Heart left ventricle (tissue), 16 donors: ENCODE measurements at regions of chr3 and their contacts with region 1.

Region 1: GRCh38 chr3:45593708-45594609 is 592 bp upstream of the LIMD1 start:
- DNase-seq: peak; percentile 76 to 89 (median 83)
- ATAC-seq: peak; percentile 19 to 90 (median 74)
- H3K4me3 ChIP-seq: peak overlapping the region; percentile 56 to 97 (median 87)
- H3K27ac ChIP-seq: peak overlapping the region; percentile 89 to 97 (median 94)
- H3K4me1 ChIP-seq: peaks cover 0 to 57% (median 48%) of the 10 kb centered on the region in 12 donors
- H3K27me3 ChIP-seq: no peaks in the 10 kb centered on the region
- CTCF ChIP-seq: peak in 1 of 12 donors; percentile 12
- POLR2A ChIP-seq: peak in 1 of 2 donors; percentile 57

Region 2: DNA sequence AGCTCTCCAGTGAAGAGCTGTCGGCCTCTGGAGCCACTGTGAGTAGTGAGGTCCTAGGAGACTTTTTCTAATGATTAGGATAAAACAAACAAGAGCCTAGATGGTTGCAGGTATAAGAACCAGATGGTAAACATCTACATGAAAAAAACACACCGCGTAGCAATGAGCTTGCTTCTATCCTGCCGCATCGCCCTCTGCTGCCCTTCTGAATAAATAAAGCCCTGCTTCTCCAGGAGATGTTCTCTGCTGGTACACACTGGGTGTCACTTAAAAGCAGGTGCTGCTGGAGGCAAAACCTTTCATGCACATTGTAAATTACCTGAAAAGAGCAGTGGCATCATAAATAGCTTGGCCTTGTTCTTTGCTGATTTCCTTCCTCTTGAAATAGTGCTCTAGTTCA is 1516.7 kb before region 1 on chr3:
- intact Hi-C with region 1: no loop called
- DNase-seq: no peak
- ATAC-seq: no peak
- H3K4me3 ChIP-seq: no peak overlapping the region
- H3K27ac ChIP-seq: no peak overlapping the region
- H3K4me1 ChIP-seq: no peaks in the 10 kb centered on the region
- H3K27me3 ChIP-seq: peaks cover 0 to 18% (median 0%) of the 10 kb centered on the region in 9 donors
- CTCF ChIP-seq: peak in 4 of 12 donors; percentile 7 to 29 (median 20)
- POLR2A ChIP-seq: no peak

Region 3: GRCh38 chr3:45516829-45517228 is 77.1 kb before region 1 on chr3:
- intact Hi-C with region 1: loop called in 7 of 10 experiments (anchors 5 to 10 kb)
- DNase-seq: no peak
- ATAC-seq: no peak
- H3K4me3 ChIP-seq: no peak overlapping the region
- H3K27ac ChIP-seq: no peak overlapping the region
- H3K4me1 ChIP-seq: peaks cover 0 to 10% (median 0%) of the 10 kb centered on the region in 12 donors
- H3K27me3 ChIP-seq: no peaks in the 10 kb centered on the region
- CTCF ChIP-seq: no peak
- POLR2A ChIP-seq: no peak

Region 4: DNA sequence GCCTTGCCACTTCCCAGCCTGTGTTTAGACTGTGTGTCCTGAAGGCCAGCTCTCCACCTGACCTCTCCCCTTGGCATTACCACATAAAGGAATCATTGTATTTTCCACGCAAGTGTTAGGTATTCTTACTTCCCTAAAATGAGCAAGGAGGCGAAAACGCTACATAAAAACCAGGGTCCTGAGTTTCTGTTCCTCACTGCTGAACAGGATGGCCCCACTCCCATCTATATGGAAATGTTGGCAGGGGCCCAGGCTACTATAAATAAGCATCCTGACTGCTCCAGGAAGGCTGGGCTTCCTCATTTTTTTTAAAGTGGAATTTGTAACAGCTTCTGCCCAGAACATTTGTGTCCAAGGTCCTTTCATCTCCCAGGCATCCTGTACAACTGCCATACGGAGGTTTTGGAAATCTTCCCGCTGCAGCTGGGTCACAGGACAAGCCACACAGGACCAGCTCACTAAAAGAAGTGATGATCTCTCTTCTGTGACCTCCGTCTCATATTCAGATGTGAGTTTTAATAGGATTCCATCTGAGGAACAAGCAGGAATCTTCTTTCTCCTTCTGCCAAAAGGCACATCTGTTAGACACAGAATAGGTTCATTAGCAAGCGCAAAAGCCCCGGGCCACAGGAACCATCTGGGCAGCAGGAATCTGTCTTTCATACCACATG is 55.9 kb before region 1 on chr3:
- intact Hi-C with region 1: loop called in 1 of 10 experiments (anchors 10 kb)
- DNase-seq: peak in 4 of 5 donors; percentile 58 to 77 (median 64)
- ATAC-seq: peak; percentile 66 to 85 (median 72)
- H3K4me3 ChIP-seq: peak overlapping the region in 1 of 12 donors; percentile 5
- H3K27ac ChIP-seq: peak overlapping the region; percentile 37 to 85 (median 78)
- H3K4me1 ChIP-seq: peaks cover 7 to 51% (median 27%) of the 10 kb centered on the region in 12 donors
- H3K27me3 ChIP-seq: no peaks in the 10 kb centered on the region
- CTCF ChIP-seq: no peak
- POLR2A ChIP-seq: no peak

Region 5: DNA sequence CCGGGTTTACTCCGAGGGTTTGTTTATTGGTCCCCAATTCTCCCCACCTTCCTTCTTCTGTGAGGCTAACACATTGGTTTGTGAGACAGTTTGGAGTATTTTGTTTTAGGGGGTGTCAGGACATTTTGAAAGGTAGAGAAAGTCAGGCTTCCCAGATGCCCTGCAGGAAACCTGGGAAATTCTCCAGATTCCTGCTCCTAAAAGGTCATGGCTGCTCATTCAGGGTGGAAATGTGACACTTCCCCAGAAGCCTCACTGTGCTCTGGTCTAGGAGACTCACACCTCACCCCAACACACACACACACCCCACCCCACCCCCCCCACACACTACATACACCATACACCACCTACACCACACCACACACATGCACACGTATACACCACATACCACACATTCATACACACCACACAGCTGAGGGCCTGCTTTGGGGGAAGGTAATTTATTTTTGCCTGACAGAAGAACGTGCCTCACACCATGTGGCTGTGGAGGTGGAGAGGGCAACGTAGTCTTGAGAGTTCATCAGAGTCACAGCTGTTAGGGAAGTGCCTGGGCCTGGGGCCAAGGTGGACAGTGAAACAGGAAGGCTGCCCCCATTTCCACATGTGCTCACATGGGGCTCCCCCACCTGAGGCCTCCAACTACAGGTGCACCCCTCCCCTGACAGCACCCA is 39.8 kb before region 1 on chr3:
- intact Hi-C with region 1: loop called in 4 of 10 experiments (anchors 5 kb)
- DNase-seq: peak in 4 of 5 donors; percentile 61 to 87 (median 64)
- ATAC-seq: peak in 3 of 4 donors; percentile 2 to 47 (median 5)
- H3K4me3 ChIP-seq: no peak overlapping the region
- H3K27ac ChIP-seq: peak overlapping the region; percentile 50 to 89 (median 76)
- H3K4me1 ChIP-seq: peaks cover 13 to 67% (median 56%) of the 10 kb centered on the region in 12 donors
- H3K27me3 ChIP-seq: no peaks in the 10 kb centered on the region
- CTCF ChIP-seq: no peak
- POLR2A ChIP-seq: no peak

Region 6: DNA sequence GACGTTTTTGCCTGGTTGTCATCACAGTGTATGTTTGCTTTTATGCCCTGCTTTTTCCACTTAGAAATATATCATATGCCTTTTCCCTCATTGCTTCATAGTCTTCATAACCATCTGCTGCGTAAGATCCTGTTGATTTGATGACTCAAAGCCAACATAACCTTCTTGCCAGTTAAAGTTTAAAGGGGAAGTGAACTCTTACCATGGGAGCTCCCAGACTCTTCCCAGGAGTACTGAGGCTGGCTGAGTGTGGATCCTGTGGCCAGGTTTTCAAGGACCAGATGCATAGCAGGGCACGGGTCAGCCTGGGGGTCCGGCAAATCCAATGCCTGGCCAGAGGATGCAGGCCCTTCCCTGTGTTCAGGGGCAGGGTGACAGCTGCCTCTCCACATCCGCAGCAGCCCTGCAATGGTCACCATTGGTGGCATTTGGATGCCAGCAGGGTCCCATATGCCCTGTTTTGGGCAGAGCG is 53.2 kb after region 1 on chr3:
- intact Hi-C with region 1: loop called in 1 of 10 experiments (anchors 5 kb)
- DNase-seq: no peak
- ATAC-seq: peak; percentile 39 to 76 (median 72)
- H3K4me3 ChIP-seq: no peak overlapping the region
- H3K27ac ChIP-seq: peak overlapping the region in 8 of 12 donors; percentile 18 to 91 (median 46)
- H3K4me1 ChIP-seq: peaks cover 0 to 59% (median 30%) of the 10 kb centered on the region in 12 donors
- H3K27me3 ChIP-seq: no peaks in the 10 kb centered on the region
- CTCF ChIP-seq: no peak
- POLR2A ChIP-seq: no peak

Region 7: DNA sequence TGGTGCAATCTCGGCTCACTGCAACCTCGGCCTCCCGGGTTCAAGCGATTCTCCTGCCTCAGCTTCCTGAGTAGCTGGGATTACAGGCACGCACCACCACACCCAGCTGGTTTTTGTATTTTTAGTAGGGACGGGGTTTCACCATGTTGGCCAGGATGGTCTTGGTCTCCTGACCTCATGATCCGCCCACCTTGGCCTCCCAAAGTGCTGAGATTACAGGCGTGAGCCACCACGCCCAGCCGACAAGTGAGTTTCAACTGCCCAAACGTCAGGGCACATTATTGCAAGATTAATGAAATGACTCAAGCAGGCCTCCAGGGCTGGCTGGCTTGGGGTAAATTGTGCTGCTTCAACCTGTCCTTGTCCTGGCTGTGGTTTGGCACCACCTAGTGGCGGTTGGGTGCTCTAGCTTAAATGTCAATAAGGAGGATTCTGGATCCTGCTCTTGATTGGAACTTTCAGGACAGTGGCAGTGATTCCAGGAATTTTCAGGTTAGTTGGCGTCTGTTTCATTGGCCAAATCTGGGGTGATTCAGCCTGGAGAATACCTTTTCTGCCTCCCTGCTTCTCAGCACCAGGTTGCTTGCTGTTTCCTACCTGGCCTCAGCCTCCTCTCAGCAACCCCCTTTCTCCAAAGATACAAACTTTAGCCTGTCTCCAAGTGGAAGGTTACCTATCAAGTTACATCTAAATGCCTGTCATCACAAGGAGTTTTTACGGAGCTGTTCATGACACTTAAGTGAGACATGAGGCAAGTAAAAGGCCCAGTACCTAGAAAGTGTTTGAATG is 62.8 kb after region 1 on chr3:
- intact Hi-C with region 1: loop called (anchors 1 to 2 kb)
- DNase-seq: peak; percentile 84 to 94 (median 93)
- ATAC-seq: peak; percentile 75 to 92 (median 88)
- H3K4me3 ChIP-seq: no peak overlapping the region
- H3K27ac ChIP-seq: peak overlapping the region in 2 of 12 donors; percentile 14 to 16
- H3K4me1 ChIP-seq: peaks cover 0 to 58% (median 41%) of the 10 kb centered on the region in 12 donors
- H3K27me3 ChIP-seq: no peaks in the 10 kb centered on the region
- CTCF ChIP-seq: peak; percentile 89 to 97 (median 93)
- POLR2A ChIP-seq: no peak